Activated B cell treated with CpG ODN at 0.5 μM for 24 hours (primary cell): ENCODE measurements at regions of chr11 and their contacts with region 1.

Region 1: GRCh38 chr11:112024773-112025678 is at the start of gene DLAT:
- DNase-seq: peak; percentile 78
- ATAC-seq: peak; percentile 77
- H3K4me3 Mint-ChIP-seq: peak within 1 kb of the TSS; percentile 100
- H3K27ac Mint-ChIP-seq: peak within 1 kb of the TSS; percentile 100
- H3K4me1 Mint-ChIP-seq: peaks cover 37% of the 10 kb centered on the region
- H3K27me3 Mint-ChIP-seq: no peaks in the 10 kb centered on the region
- CTCF ChIP-seq: no peak
- total RNA-seq, gene DLAT: 27.5 and 31.5 TPM in 2 replicates

Region 2: DNA sequence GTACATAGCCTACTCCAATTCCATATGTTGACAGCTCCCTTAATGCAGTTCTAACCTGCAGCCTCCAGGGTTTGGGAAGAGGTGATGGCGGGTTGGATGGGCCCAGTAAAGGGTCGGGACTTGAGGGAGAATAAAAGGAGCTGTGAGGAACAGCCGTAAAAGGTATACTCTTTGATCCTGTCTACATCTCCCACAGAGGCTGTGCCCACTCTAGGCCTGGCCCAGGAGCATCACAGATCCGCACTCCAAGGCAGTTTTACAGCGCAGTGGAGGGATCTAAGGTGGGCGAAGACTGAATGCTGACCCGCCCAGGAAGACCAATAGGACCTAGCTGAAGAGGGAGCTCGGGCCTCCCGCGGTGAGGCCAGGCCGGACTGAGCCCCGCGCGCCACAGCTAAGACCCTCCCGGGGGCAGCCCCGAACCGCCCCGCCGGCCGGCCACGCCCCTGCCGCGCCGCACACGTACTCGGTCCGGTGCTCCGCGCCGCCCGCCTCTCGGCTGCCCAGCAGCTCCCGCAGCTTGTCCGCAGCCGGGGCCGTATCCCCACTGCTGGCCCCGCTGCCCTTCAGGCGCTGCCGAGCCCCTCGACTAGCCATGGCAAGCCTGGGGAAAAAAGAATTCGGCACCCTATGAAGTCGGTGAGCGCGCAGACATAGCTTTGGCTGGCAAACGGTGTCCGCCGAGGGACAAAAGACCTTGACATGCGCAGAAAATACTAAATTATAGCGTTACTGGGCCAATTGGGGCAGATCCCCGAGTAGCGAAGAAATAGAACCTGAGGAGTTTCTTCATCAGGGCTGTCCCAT is 153.9 kb before region 1 on chr11 and contains the start of gene ALG9:
- CTCF ChIA-PET with region 1: no interaction called
- POLR2A ChIA-PET with region 1: interaction called, 4 read pairs
- intact Hi-C with region 1: loop called (anchors 2 kb)
- DNase-seq: peak; percentile 90
- ATAC-seq: peak; percentile 89
- H3K4me3 Mint-ChIP-seq: peak within 1 kb of the TSS; percentile 93
- H3K27ac Mint-ChIP-seq: peak within 1 kb of the TSS; percentile 92
- H3K4me1 Mint-ChIP-seq: peaks cover 13% of the 10 kb centered on the region
- H3K27me3 Mint-ChIP-seq: no peaks in the 10 kb centered on the region
- CTCF ChIP-seq: no peak
- total RNA-seq, gene ALG9: 17.0 and 20.1 TPM in 2 replicates

Region 3: GRCh38 chr11:112004389-112004788 is 20.6 kb before region 1 on chr11:
- CTCF ChIA-PET with region 1: no interaction called
- POLR2A ChIA-PET with region 1: no interaction called
- intact Hi-C with region 1: loop called (anchors 2 kb)
- DNase-seq: peak; percentile 22
- ATAC-seq: peak; percentile 99
- H3K4me3 Mint-ChIP-seq: no peak overlapping the region
- H3K27ac Mint-ChIP-seq: no peak overlapping the region
- H3K4me1 Mint-ChIP-seq: peaks cover 7% of the 10 kb centered on the region
- H3K27me3 Mint-ChIP-seq: peaks cover 21% of the 10 kb centered on the region
- CTCF ChIP-seq: no peak

Region 4: GRCh38 chr11:112050721-112051120 is 25.7 kb after region 1 on chr11:
- CTCF ChIA-PET with region 1: no interaction called
- POLR2A ChIA-PET with region 1: interaction called, 12 read pairs
- intact Hi-C with region 1: loop called (anchors 1 kb)
- DNase-seq: no peak
- ATAC-seq: peak; percentile 64
- H3K4me3 Mint-ChIP-seq: peak overlapping the region; percentile 69
- H3K27ac Mint-ChIP-seq: peak overlapping the region; percentile 91
- H3K4me1 Mint-ChIP-seq: peaks cover 56% of the 10 kb centered on the region
- H3K27me3 Mint-ChIP-seq: no peaks in the 10 kb centered on the region
- CTCF ChIP-seq: no peak

Region 5: GRCh38 chr11:112074026-112074811 is 49.2 kb after region 1 on chr11 and contains the start of gene NKAPD1:
- CTCF ChIA-PET with region 1: no interaction called
- POLR2A ChIA-PET with region 1: no interaction called
- intact Hi-C with region 1: loop called (anchors 1 kb)
- DNase-seq: peak; percentile 69
- ATAC-seq: peak; percentile 82
- H3K4me3 Mint-ChIP-seq: peak within 1 kb of the TSS; percentile 96
- H3K27ac Mint-ChIP-seq: peak within 1 kb of the TSS; percentile 95
- H3K4me1 Mint-ChIP-seq: peaks cover 25% of the 10 kb centered on the region
- H3K27me3 Mint-ChIP-seq: no peaks in the 10 kb centered on the region
- CTCF ChIP-seq: no peak
- total RNA-seq, gene NKAPD1: 24.0 and 26.3 TPM in 2 replicates

Region 6: DNA sequence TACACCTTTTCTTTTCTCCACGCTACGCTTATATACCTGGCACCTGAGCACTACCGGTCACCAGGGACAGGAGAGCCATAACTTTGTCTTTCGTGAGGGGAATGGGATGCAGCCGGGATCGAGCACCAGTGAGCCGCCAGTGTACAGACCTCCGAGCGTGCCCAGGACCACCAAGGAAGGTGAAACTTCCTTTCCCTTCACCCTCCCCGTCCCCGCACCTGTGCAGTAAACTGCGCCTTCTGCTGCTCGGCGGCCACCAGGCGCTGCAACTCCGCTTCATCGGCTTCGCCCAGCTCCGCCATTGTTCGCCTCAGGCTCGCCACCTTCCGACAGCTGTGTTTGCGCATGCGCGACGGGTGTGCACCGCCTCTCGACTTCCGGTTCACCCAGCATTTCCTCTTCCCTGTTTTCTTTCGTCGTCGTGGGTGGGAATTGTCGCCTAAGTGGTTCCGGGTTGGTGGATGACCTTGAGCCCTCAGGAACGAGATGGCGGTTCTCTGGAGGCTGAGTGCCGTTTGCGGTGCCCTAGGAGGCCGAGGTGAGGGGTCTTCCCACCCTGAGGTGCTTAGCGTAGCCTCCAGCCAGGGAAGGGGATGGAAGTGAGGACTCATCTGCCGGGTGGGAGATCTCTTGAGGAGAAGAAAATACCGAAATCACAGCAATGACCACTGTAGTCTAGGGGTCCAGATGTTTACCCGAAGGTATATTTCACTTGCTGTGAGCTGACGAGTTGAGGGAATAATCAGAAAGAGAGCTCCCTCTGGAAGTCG is 61.6 kb after region 1 on chr11 and contains the starts of genes SDHD and TIMM8B:
- CTCF ChIA-PET with region 1: no interaction called
- POLR2A ChIA-PET with region 1: interaction called, 8 read pairs
- intact Hi-C with region 1: loop called (anchors 1 kb)
- DNase-seq: peak; percentile 88
- ATAC-seq: peak; percentile 88
- H3K4me3 Mint-ChIP-seq: peak within 1 kb of the TSS; percentile 100
- H3K27ac Mint-ChIP-seq: peak within 1 kb of the TSS; percentile 97
- H3K4me1 Mint-ChIP-seq: peaks cover 45% of the 10 kb centered on the region
- H3K27me3 Mint-ChIP-seq: no peaks in the 10 kb centered on the region
- CTCF ChIP-seq: no peak
- total RNA-seq, gene SDHD: 79.9 and 82.1 TPM in 2 replicates
- total RNA-seq, gene TIMM8B: 37.0 and 39.6 TPM in 2 replicates